GM12878 (cell line): ENCODE measurements at regions of chr3 and their contacts with region 1.

Region 1: DNA sequence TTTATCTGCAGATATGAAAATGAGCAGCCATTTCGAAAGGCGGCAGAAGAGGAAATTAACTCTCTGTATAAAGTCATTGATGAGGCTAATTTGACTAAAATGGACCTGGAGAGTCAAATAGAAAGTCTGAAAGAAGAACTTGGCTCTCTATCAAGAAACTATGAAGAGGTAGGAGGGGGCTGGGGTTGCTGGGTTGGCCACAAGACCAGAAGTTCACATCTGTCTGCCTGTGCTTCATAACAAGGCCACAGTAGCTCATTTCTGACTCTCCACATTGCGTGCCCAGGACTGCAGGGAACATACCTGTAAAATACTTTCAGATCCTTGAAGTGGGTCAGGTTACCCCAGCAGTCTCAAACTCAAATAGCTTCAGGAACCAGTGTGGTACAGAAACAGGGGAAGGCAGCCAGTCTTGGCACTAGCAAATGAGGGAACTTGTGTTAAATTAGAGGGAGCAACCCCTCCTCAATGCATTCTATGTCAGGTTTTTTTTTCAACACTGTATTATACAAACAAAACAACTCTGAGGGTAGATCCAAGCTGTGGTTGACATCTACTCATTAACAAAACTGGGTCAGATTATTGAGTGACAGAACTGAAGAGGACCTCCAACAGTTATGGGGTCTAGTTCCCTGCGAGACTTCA is 48.7 kb downstream of the BFSP2 start:
- DNase-seq: peak; percentile 97
- ATAC-seq: peak; percentile 97
- H3K4me3 ChIP-seq: peak overlapping the region; percentile 39; the same call in 1 of the 2 replicates
- H3K27ac ChIP-seq: peak overlapping the region; percentile 98
- H3K4me1 ChIP-seq: peaks cover 62% of the 10 kb centered on the region
- H3K27me3 ChIP-seq: no peaks in the 10 kb centered on the region
- CTCF ChIP-seq: no peak
- EP300 ChIP-seq: peak; percentile 90 to 93
- POLR2A ChIP-seq: 0 out of 2 replicates have a peak, but pooled peaks have one; percentile 56
- RAD21 ChIP-seq: no peak

Region 2: GRCh38 chr3:133089906-133090485 is 358.6 kb before region 1 on chr3:
- CTCF ChIA-PET with region 1: no interaction called
- POLR2A ChIA-PET with region 1: no interaction called
- RAD21 ChIA-PET with region 1: no interaction called
- SMC1A ChIA-PET with region 1: no interaction called
- in situ Hi-C with region 1: no loop called
- intact Hi-C with region 1: no loop called
- DNase-seq: no peak
- ATAC-seq: peak; percentile 93
- H3K4me3 ChIP-seq: no peak overlapping the region
- H3K27ac ChIP-seq: no peak overlapping the region
- H3K4me1 ChIP-seq: no peaks in the 10 kb centered on the region
- H3K27me3 ChIP-seq: no peaks in the 10 kb centered on the region; a peak in 1 of 4 replicates
- CTCF ChIP-seq: no peak
- EP300 ChIP-seq: peak in 1 of 2 experiments; percentile 38; a peak in 1 of 4 replicates
- POLR2A ChIP-seq: no peak
- RAD21 ChIP-seq: no peak

Region 3: GRCh38 chr3:133283958-133284807 is 164.4 kb before region 1 on chr3:
- CTCF ChIA-PET with region 1: no interaction called
- POLR2A ChIA-PET with region 1: no interaction called
- RAD21 ChIA-PET with region 1: no interaction called
- SMC1A ChIA-PET with region 1: no interaction called
- in situ Hi-C with region 1: no loop called
- intact Hi-C with region 1: no loop called
- DNase-seq: no peak
- ATAC-seq: no peak
- H3K4me3 ChIP-seq: no peak overlapping the region
- H3K27ac ChIP-seq: no peak overlapping the region
- H3K4me1 ChIP-seq: no peaks in the 10 kb centered on the region
- H3K27me3 ChIP-seq: peaks cover 0 to 4% of the 10 kb centered on the region in 2 experiments; a peak in 1 of 4 replicates
- CTCF ChIP-seq: no peak
- EP300 ChIP-seq: no peak
- POLR2A ChIP-seq: no peak
- RAD21 ChIP-seq: no peak

Region 4: GRCh38 chr3:133426721-133427120 is 21.9 kb before region 1 on chr3:
- CTCF ChIA-PET with region 1: interaction called, 5 read pairs
- POLR2A ChIA-PET with region 1: interaction called, 9 read pairs
- RAD21 ChIA-PET with region 1: interaction called, 3 read pairs
- SMC1A ChIA-PET with region 1: interaction called, 13 read pairs
- in situ Hi-C with region 1: no loop called
- intact Hi-C with region 1: no loop called
- DNase-seq: no peak
- ATAC-seq: no peak
- H3K4me3 ChIP-seq: no peak overlapping the region
- H3K27ac ChIP-seq: no peak overlapping the region
- H3K4me1 ChIP-seq: peaks cover 5% of the 10 kb centered on the region; the same call in 1 of the 2 replicates
- H3K27me3 ChIP-seq: peaks cover 0 to 4% of the 10 kb centered on the region in 2 experiments; a peak in 1 of 4 replicates
- CTCF ChIP-seq: no peak
- EP300 ChIP-seq: no peak
- POLR2A ChIP-seq: no peak
- RAD21 ChIP-seq: no peak

Region 5: GRCh38 chr3:133475245-133476010 is 26.8 kb after region 1 on chr3:
- CTCF ChIA-PET with region 1: interaction called, 15 read pairs
- POLR2A ChIA-PET with region 1: interaction called, 12 read pairs
- RAD21 ChIA-PET with region 1: interaction called, 17 read pairs
- SMC1A ChIA-PET with region 1: interaction called, 380 read pairs
- in situ Hi-C with region 1: no loop called
- intact Hi-C with region 1: loop called (anchors 1 kb)
- DNase-seq: peak; percentile 89
- ATAC-seq: peak; percentile 88
- H3K4me3 ChIP-seq: peak overlapping the region; percentile 40; the same call in 1 of the 2 replicates
- H3K27ac ChIP-seq: peak overlapping the region; percentile 97
- H3K4me1 ChIP-seq: peaks cover 69% of the 10 kb centered on the region
- H3K27me3 ChIP-seq: no peaks in the 10 kb centered on the region
- CTCF ChIP-seq: peak in 1 of 3 experiments; percentile 10; a peak in 1 of 6 replicates
- EP300 ChIP-seq: peak; percentile 80 to 94
- POLR2A ChIP-seq: no peak
- RAD21 ChIP-seq: peak; percentile 12; the same call in 1 of the 2 replicates

Region 6: DNA sequence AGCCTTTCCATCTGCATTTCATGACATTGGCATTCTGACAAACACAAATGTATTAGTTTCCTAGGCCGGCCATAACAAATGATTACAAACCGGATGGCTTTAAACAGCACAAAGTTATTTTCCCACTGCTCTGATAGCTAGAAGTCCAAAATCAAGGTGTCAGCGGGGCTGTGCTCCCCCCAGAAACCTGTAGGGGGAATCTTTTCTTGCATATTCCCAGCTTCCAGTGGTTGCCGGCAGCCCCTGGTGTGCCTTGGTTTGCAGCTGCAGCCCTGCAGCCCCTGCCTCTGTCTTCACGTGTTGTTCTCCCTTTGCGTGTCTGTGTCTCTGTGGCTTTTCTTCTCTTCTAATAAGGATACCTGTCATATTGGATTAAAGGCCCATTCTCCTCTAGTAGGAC is 45.9 kb after region 1 on chr3:
- CTCF ChIA-PET with region 1: no interaction called
- POLR2A ChIA-PET with region 1: interaction called, 3 read pairs
- RAD21 ChIA-PET with region 1: interaction called, 7 read pairs
- SMC1A ChIA-PET with region 1: interaction called, 35 read pairs
- in situ Hi-C with region 1: no loop called
- intact Hi-C with region 1: loop called (anchors 5 kb)
- DNase-seq: no peak
- ATAC-seq: no peak
- H3K4me3 ChIP-seq: no peak overlapping the region
- H3K27ac ChIP-seq: no peak overlapping the region
- H3K4me1 ChIP-seq: peaks cover 32% of the 10 kb centered on the region
- H3K27me3 ChIP-seq: no peaks in the 10 kb centered on the region
- CTCF ChIP-seq: 0 out of 6 replicates have a peak, but pooled peaks of 1 of the 3 experiments have one; percentile 12
- EP300 ChIP-seq: no peak
- POLR2A ChIP-seq: no peak
- RAD21 ChIP-seq: 0 out of 2 replicates have a peak, but pooled peaks have one; percentile 19

Region 7: GRCh38 chr3:133573054-133573628 is 124.5 kb after region 1 on chr3:
- CTCF ChIA-PET with region 1: interaction called, 30 read pairs
- POLR2A ChIA-PET with region 1: interaction called, 30 read pairs
- RAD21 ChIA-PET with region 1: interaction called, 56 read pairs
- SMC1A ChIA-PET with region 1: interaction called, 92 read pairs
- in situ Hi-C with region 1: loop called (anchors 5 kb)
- intact Hi-C with region 1: loop called (anchors 1 kb)
- DNase-seq: peak; percentile 99
- ATAC-seq: peak; percentile 83
- H3K4me3 ChIP-seq: peak overlapping the region; percentile 73
- H3K27ac ChIP-seq: peak overlapping the region; percentile 97
- H3K4me1 ChIP-seq: peaks cover 18% of the 10 kb centered on the region
- H3K27me3 ChIP-seq: no peaks in the 10 kb centered on the region
- CTCF ChIP-seq: peak in 2 of 3 experiments; percentile 3 to 14; a peak in 2 of 6 replicates
- EP300 ChIP-seq: no peak
- POLR2A ChIP-seq: no peak; the same call in 1 of the 2 replicates
- RAD21 ChIP-seq: no peak

Region 8: DNA sequence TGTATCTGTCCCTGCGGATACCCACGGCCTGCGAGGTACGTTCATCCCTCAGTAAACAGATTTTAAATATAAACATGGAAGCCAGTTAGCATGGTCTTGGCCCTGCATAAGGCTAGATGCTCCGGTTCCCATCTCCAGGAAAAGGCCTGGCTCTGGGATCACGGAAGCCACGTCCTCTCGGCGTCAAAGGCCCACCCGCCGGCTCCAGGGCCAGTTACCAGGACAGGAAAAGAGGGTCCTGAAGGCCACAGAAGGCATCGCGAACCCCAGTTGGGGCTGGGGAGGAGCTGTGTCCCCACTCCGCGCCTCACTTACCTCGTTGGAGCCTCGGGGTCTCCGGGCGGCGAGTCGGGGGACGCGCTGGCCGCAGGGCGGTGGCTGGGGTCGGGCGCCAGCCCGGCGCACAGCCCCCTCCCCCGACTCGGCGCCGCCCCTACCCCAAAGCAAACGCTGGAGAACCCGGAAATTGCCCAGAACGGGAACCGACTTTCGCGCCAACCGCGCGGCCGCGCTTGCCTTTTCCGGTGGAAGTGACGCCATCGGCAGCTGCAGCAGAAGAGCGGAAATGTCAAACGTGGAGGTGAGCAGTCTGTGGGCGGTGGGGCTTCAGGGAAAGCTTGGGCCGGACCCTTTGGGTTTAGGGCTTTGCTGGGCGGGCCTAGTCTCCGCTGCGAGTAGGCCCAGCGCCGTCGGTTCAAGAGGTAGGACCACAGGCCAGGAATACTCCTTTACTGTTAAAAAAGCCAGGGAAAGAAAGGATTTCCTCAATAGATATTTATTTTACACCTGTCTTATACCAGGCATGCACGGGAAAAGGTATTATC is 213.1 kb after region 1 on chr3 and contains the start of gene TOPBP1:
- CTCF ChIA-PET with region 1: no interaction called
- POLR2A ChIA-PET with region 1: interaction called, 4 read pairs
- RAD21 ChIA-PET with region 1: interaction called, 4 read pairs
- SMC1A ChIA-PET with region 1: interaction called, 3 read pairs
- in situ Hi-C with region 1: no loop called
- intact Hi-C with region 1: loop called (anchors 5 kb)
- DNase-seq: no peak
- ATAC-seq: peak; percentile 86
- H3K4me3 ChIP-seq: peak within 1 kb of the TSS; percentile 95
- H3K27ac ChIP-seq: peak within 1 kb of the TSS; percentile 96
- H3K4me1 ChIP-seq: peaks cover 4% of the 10 kb centered on the region; the same call in 1 of the 2 replicates
- H3K27me3 ChIP-seq: no peaks in the 10 kb centered on the region
- CTCF ChIP-seq: no peak
- EP300 ChIP-seq: no peak
- POLR2A ChIP-seq: peak; percentile 92
- RAD21 ChIP-seq: no peak
- polyA plus RNA-seq, gene TOPBP1: 18.3 to 19.9 TPM

Region 9: GRCh38 chr3:134094491-134094890 is 645.9 kb after region 1 on chr3:
- CTCF ChIA-PET with region 1: no interaction called
- POLR2A ChIA-PET with region 1: no interaction called
- RAD21 ChIA-PET with region 1: no interaction called
- SMC1A ChIA-PET with region 1: no interaction called
- in situ Hi-C with region 1: no loop called
- intact Hi-C with region 1: no loop called
- DNase-seq: no peak
- ATAC-seq: no peak
- H3K4me3 ChIP-seq: no peak overlapping the region
- H3K27ac ChIP-seq: no peak overlapping the region
- H3K4me1 ChIP-seq: no peaks in the 10 kb centered on the region
- H3K27me3 ChIP-seq: no peaks in the 10 kb centered on the region
- CTCF ChIP-seq: no peak
- EP300 ChIP-seq: no peak
- POLR2A ChIP-seq: no peak
- RAD21 ChIP-seq: no peak